ENCODE measurements at regions of chr11 and their contacts with region 1.

Region 1: GRCh38 chr11:70191495-70192140 is 11.5 kb upstream of the FADD start:
- DNase-seq: peak; percentile 83
- H3K4me3 ChIP-seq: no peak overlapping the region
- H3K27ac ChIP-seq: no peak overlapping the region
- H3K4me1 ChIP-seq: no peaks in the 10 kb centered on the region
- H3K27me3 ChIP-seq: peaks cover 15% of the 10 kb centered on the region
- CTCF ChIP-seq: peak; percentile 94

Region 2: DNA sequence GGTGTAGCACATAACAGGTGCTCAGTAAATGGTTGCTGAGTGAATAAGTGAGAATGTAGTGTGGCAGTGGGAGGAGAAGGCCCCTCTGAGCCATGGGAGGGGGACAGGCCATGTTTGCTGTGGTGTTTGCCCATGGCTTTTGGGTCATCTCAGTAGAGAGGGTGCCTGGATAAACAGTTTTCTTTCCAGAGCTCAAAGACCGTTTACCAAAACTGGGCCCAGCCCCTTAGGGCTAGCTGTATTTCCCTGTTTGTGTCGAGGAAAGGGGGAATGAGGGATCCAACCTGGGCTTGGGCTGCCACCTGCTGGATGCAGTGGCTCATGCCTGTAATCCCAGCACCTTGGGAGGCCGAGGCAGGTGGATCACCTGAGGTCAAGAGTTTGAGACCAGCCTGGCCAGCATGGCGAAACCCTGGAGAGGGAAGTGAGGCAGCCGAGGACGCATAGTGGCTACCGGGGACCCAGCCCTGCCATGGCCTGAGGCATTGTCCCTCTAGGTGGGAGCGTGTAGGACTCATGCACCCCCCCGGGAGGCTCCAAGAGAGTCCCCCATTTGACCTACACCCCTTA is 507.8 kb before region 1 on chr11:
- intact Hi-C with region 1: loop called (anchors 5 kb)
- DNase-seq: no peak
- H3K4me3 ChIP-seq: no peak overlapping the region
- H3K27ac ChIP-seq: no peak overlapping the region
- H3K4me1 ChIP-seq: peaks cover 8% of the 10 kb centered on the region
- H3K27me3 ChIP-seq: peaks cover 27% of the 10 kb centered on the region
- CTCF ChIP-seq: peak; percentile 47

Region 3: DNA sequence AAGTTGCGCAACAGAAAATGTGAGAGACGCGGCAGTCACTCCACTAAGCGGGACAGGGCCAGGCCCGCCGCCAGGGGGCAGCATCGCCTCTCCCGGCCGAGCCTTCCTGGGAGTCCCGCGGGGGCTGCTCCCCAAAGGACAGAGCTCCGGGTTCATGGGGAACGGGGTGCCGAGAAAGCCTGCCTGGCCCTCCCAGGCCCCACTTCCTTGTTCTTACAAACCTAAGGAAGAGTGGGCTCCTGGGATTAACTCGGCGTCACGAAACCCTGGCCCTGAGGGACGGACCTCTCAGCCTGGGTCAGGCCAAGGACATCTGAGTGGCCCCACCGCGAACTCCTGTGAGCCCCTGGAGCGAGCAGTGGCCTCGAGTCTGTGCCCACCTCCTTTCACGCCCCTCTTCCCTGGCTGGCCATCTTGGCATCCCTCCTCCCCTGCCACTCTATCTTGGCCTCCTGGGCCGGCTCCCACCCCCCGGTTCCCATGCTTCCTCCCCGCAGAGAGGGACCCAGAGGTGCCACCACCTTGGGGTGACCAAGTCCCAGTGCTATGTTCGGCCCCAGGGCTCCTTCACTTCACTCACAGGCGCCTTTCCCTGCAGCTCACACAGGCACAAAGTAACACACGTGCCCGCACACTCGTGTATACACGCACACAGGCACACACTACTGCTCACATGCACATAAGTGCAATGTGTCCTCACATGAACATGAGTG is 272.5 kb before region 1 on chr11:
- intact Hi-C with region 1: loop called (anchors 5 kb)
- DNase-seq: peak; percentile 78
- H3K4me3 ChIP-seq: peak overlapping the region; percentile 36
- H3K27ac ChIP-seq: peak overlapping the region; percentile 75
- H3K4me1 ChIP-seq: peaks cover 36% of the 10 kb centered on the region
- H3K27me3 ChIP-seq: peaks cover 46% of the 10 kb centered on the region
- CTCF ChIP-seq: peak; percentile 97

Region 4: GRCh38 chr11:70364745-70365543 is 173.3 kb after region 1 on chr11:
- intact Hi-C with region 1: no loop called
- DNase-seq: no peak
- H3K4me3 ChIP-seq: no peak overlapping the region
- H3K27ac ChIP-seq: no peak overlapping the region
- H3K4me1 ChIP-seq: peaks cover 3% of the 10 kb centered on the region
- H3K27me3 ChIP-seq: no peaks in the 10 kb centered on the region
- CTCF ChIP-seq: no peak